WTC11 (cell line): ENCODE measurements at regions of chr6 and their contacts with region 1.

Region 1: DNA sequence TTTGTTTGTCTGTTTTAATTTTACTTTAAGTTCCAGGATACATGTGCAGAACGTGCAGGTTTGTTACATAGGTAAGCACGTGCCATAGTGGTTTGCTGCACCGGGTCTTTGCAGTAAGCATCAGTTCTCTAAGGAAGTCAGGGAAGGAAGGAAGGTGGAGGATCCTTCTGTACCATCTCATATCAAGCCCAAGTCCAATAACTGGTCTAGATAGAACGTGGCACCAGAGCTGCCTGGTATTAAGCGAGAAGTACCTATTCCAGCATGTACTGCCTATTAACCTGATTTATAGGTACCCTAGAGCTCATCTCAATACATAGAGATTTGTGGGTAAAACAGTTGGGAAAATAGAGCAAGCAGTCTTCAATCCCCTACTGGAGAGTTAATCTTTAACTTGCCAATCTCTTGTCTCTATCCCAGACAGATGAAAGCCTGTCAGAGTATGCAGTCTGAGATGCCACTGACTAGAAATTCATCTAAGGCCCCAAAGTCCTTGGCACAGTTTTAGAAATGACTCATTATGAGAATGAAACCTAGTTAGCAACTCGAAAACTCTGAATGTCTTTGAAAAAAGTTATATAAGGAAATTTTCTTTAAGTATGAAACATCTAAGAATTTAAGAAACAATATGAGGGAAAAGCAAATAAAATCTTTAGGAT is 144.9 kb downstream of the TFAP2A start:
- DNase-seq: no peak
- ATAC-seq: no peak
- H3K4me3 Mint-ChIP-seq: no peak overlapping the region
- H3K27ac Mint-ChIP-seq: no peak overlapping the region
- H3K4me1 Mint-ChIP-seq: peaks cover 53% of the 10 kb centered on the region
- H3K27me3 Mint-ChIP-seq: no peaks in the 10 kb centered on the region
- CTCF ChIP-seq: no peak

Region 2: GRCh38 chr6:10146723-10147451 is 123.1 kb before region 1 on chr6:
- CTCF ChIA-PET with region 1: no interaction called
- POLR2A ChIA-PET with region 1: no interaction called
- DNase-seq: peak; percentile 29
- ATAC-seq: peak; percentile 100
- H3K4me3 Mint-ChIP-seq: peak overlapping the region; percentile 73
- H3K27ac Mint-ChIP-seq: peak overlapping the region; percentile 88; the same call in 1 of the 2 replicates
- H3K4me1 Mint-ChIP-seq: peaks cover 13% of the 10 kb centered on the region
- H3K27me3 Mint-ChIP-seq: no peaks in the 10 kb centered on the region
- CTCF ChIP-seq: no peak

Region 3: DNA sequence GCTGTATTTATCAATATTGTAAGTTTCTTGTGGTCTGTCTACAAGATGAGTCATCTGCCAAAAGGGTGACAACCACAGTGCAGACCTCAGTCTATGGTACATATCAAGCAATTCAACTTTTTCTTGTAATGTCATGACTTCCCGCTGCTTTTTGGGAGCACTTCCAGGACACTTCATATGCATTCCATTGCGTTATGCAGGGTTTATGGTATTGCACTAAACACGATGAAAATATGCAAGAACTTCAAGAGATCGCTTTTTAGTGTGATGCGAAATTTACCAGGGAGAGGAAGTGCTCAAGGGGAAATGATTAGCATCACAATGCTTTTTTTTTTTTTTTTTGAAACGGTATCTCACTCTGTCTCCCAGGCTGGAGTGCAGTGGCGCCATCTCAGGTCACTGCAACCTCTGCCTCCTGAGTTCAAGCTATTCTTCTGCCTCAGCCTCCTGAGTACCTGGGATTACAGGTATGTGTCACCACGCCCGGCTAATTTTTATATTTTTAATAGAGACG is 21.5 kb before region 1 on chr6:
- CTCF ChIA-PET with region 1: interaction called, 12 read pairs
- POLR2A ChIA-PET with region 1: no interaction called
- DNase-seq: peak; percentile 46
- ATAC-seq: peak; percentile 90
- H3K4me3 Mint-ChIP-seq: no peak overlapping the region
- H3K27ac Mint-ChIP-seq: no peak overlapping the region
- H3K4me1 Mint-ChIP-seq: peaks cover 27% of the 10 kb centered on the region
- H3K27me3 Mint-ChIP-seq: no peaks in the 10 kb centered on the region
- CTCF ChIP-seq: no peak

Region 4: GRCh38 chr6:10409233-10409714 is 139.3 kb after region 1 on chr6:
- CTCF ChIA-PET with region 1: no interaction called
- POLR2A ChIA-PET with region 1: no interaction called
- DNase-seq: no peak
- ATAC-seq: no peak
- H3K4me3 Mint-ChIP-seq: peak overlapping the region; percentile 57
- H3K27ac Mint-ChIP-seq: no peak overlapping the region
- H3K4me1 Mint-ChIP-seq: peaks cover 83% of the 10 kb centered on the region
- H3K27me3 Mint-ChIP-seq: peaks cover 90% of the 10 kb centered on the region
- CTCF ChIP-seq: no peak